ENCODE measurements at regions of chr4 and their contacts with region 1.

Region 1: DNA sequence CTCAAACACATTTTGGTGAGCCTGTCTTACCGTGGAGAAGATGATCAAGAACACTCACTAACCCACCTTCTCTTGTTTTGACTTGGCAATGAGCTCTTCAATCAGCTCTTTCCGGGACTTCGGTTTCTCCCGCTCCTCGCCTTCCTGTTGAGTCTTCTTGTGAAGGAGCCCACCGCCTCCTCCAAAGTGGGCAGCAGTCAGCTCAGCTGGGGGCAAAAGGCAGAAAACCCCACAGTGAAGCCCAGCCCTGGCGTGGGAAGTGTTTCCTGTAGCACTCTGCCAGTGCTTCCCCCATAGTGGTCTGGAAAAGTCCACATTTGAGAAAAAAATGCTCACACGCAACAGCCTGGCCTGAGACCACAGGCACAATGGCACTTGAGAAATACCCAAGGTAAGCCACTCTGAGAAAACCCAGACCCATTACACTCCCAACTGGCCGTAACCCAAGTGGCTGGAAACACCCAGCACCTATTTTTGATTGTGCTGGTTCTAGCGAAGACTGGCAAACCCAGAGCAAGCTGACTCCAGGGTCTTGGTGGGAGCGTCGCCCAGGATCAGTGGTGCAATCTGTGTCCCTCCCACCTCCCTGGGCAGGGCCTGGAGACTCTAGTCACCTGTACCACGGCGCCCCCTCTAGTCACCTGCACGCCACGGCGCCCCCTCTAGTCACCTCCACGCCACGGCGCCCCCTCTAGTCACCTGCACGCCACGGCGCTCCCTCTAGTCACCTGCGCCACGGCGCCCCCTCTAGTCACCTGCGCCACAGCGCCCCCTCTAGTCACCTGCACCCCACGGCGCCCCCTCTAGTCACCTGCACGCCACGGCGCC is 8.6 kb downstream of the NOP14 start:
- DNase-seq: peak; percentile 75
- ATAC-seq: peak; percentile 89
- H3K4me3 ChIP-seq: no peak overlapping the region
- H3K27ac ChIP-seq: peak overlapping the region; percentile 78
- H3K4me1 ChIP-seq: peaks cover 41% of the 10 kb centered on the region
- H3K27me3 ChIP-seq: no peaks in the 10 kb centered on the region
- CTCF ChIP-seq: peak in 2 of 3 experiments; percentile 48 to 49; a peak in 5 of 6 replicates
- EP300 ChIP-seq: peak in 1 of 2 experiments; percentile 40; a peak in 2 of 4 replicates
- POLR2A ChIP-seq: no peak
- RAD21 ChIP-seq: 0 out of 2 replicates have a peak, but pooled peaks have one; percentile 8

Region 2: GRCh38 chr4:2942532-2943320 is 11.8 kb before region 1 on chr4:
- CTCF ChIA-PET with region 1: interaction called, 62 read pairs
- POLR2A ChIA-PET with region 1: interaction called, 9 read pairs
- RAD21 ChIA-PET with region 1: interaction called, 52 read pairs
- SMC1A ChIA-PET with region 1: interaction called, 65 read pairs
- in situ Hi-C with region 1: no loop called
- intact Hi-C with region 1: no loop called
- DNase-seq: no peak
- ATAC-seq: no peak
- H3K4me3 ChIP-seq: no peak overlapping the region
- H3K27ac ChIP-seq: no peak overlapping the region
- H3K4me1 ChIP-seq: peaks cover 5% of the 10 kb centered on the region
- H3K27me3 ChIP-seq: no peaks in the 10 kb centered on the region
- CTCF ChIP-seq: no peak
- EP300 ChIP-seq: no peak
- POLR2A ChIP-seq: peak; percentile 61
- RAD21 ChIP-seq: no peak

Region 3: GRCh38 chr4:3179126-3179706 is 224.6 kb after region 1 on chr4:
- CTCF ChIA-PET with region 1: no interaction called
- POLR2A ChIA-PET with region 1: no interaction called
- RAD21 ChIA-PET with region 1: no interaction called
- SMC1A ChIA-PET with region 1: no interaction called
- in situ Hi-C with region 1: no loop called
- intact Hi-C with region 1: no loop called
- DNase-seq: no peak
- ATAC-seq: no peak
- H3K4me3 ChIP-seq: no peak overlapping the region
- H3K27ac ChIP-seq: no peak overlapping the region
- H3K4me1 ChIP-seq: no peaks in the 10 kb centered on the region
- H3K27me3 ChIP-seq: no peaks in the 10 kb centered on the region
- CTCF ChIP-seq: no peak
- EP300 ChIP-seq: no peak
- POLR2A ChIP-seq: peak; percentile 56
- RAD21 ChIP-seq: no peak